PC-9 (cell line): ENCODE measurements at regions of chr7 and their contacts with region 1.

Region 1: DNA sequence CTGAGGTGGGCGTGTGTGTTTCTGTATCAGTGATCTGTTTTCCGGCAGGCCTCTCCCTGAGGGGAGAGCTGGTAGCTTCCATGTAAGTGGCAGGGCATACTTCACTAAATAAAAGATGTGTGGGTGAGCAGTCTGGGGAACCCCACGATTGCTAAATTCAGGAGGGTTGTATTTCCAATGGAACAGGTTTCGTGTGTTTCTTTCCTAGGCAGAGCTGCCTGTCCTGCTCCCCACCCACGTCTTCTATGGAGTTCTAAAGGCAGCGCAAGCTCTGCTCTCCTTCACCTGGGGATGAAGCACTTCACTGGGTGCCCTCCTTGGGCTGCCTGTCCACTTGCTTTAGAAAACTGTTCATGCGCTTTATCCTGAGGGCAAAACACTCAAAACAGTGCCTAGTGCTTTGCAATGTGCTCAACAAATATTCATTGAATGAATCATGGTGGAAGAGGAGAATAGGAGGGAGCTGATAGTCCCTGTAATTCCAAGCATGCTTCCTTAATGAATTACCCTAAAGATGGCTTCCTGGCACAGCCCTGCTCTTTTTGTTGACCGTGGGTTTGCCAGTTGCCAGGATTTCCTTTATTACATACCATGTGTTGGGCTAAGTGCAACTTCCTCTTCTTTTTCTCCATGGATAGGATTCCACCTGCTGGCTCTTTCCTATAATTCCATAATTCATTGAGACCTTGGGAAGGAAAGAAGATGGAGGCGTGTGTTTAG is 50.6 kb upstream of the SRPK2 start:
- DNase-seq: peak; percentile 71 to 94
- H3K4me3 ChIP-seq: peak overlapping the region; percentile 12; the same call in 1 of the 2 replicates
- H3K27ac ChIP-seq: peak overlapping the region; percentile 82
- H3K4me1 ChIP-seq: peaks cover 22% of the 10 kb centered on the region
- H3K27me3 ChIP-seq: no peaks in the 10 kb centered on the region
- CTCF ChIP-seq: 0 out of 2 replicates have a peak, but pooled peaks have one; percentile 21

Region 2: DNA sequence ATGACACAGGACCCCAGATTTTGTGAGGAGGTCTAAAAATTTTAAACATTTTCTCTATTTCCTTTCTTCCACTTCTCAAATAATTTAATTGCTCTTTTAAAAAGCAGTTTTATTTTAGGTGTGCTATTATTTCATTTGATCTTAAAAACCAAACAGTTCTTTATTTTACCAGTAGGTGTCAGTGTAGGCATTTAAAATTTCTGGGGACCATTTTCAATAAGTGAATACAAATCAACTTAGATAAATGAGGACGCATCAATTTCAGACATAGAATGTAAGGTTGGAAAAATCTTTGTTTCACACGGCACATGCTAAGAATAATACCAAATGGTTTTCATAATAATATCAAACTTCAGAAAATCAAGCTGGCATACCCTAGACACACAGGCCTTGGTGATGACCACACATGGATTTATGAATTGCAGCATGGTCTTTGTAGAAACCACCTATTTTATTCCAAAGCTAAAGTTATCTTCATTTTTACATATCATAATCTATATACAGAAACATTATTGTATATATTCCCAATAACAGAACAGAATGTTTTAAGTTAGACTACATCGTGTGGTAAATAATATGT is 1865.8 kb before region 1 on chr7:
- CTCF ChIA-PET with region 1: interaction called, 12 read pairs
- POLR2A ChIA-PET with region 1: interaction called, 4 read pairs
- intact Hi-C with region 1: no loop called
- DNase-seq: peak in 1 of 2 experiments; percentile 38
- H3K4me3 ChIP-seq: no peak overlapping the region
- H3K27ac ChIP-seq: no peak overlapping the region
- H3K4me1 ChIP-seq: no peaks in the 10 kb centered on the region
- H3K27me3 ChIP-seq: 0 out of 2 replicates have a peak, but pooled peaks cover 5% of the 10 kb centered on the region
- CTCF ChIP-seq: peak; percentile 83

Region 3: GRCh38 chr7:105426606-105427146 is 12.7 kb before region 1 on chr7:
- CTCF ChIA-PET with region 1: no interaction called
- POLR2A ChIA-PET with region 1: no interaction called
- intact Hi-C with region 1: no loop called
- DNase-seq: no peak
- H3K4me3 ChIP-seq: no peak overlapping the region
- H3K27ac ChIP-seq: no peak overlapping the region
- H3K4me1 ChIP-seq: no peaks in the 10 kb centered on the region
- H3K27me3 ChIP-seq: no peaks in the 10 kb centered on the region
- CTCF ChIP-seq: no peak

Region 4: GRCh38 chr7:105480931-105481330 is 41.6 kb after region 1 on chr7:
- CTCF ChIA-PET with region 1: no interaction called
- POLR2A ChIA-PET with region 1: no interaction called
- intact Hi-C with region 1: no loop called
- DNase-seq: no peak
- H3K4me3 ChIP-seq: no peak overlapping the region
- H3K27ac ChIP-seq: no peak overlapping the region
- H3K4me1 ChIP-seq: no peaks in the 10 kb centered on the region
- H3K27me3 ChIP-seq: no peaks in the 10 kb centered on the region
- CTCF ChIP-seq: no peak